Lower leg skin (tissue), 4 donors: ENCODE measurements at regions of chr2 and their contacts with region 1.

Region 1: GRCh38 chr2:57920342-57920939 is 126.2 kb upstream of the VRK2 start:
- DNase-seq: no peak
- H3K4me3 ChIP-seq: no peak overlapping the region
- CTCF ChIP-seq: no peak
- POLR2A ChIP-seq: no peak

Region 2: DNA sequence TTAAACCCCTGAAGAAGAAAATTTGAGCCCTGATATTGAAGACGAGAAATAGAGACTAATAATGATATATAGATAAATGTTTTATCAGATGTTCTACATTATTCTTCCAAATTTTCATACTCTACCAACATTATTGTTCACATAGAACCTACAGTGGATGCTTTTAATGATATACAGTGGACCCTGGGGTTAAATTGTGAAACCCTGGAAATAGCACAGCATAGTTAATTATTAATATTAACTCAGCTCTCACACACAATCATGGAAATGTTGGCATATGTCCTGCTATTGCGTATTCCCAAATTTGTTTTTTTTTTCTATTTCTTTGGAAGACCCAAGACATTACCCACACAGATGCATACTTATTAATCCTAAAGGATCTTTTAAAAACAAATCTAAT is 1156.8 kb before region 1 on chr2:
- intact Hi-C with region 1: no loop called
- DNase-seq: no peak
- H3K4me3 ChIP-seq: no peak overlapping the region
- CTCF ChIP-seq: no peak
- POLR2A ChIP-seq: no peak

Region 3: DNA sequence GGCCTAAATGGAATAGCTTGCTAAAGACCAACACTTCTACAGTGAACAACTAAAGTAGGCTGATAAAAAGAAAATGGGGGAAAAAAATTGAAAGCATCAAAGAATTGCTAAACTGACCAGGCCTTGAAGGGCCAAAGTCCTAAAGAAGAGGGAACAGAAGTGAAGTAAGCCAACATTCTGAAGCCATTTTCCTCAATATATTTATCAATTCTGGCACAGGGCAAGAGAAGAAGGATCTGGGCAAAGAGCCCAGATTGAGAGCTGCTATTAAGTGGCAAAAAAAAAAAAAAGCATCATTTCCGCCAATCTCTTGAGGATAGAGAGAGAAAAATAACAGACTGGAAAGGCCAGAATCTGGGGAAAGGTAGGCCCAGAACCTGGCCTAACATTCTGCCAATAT is 295.0 kb after region 1 on chr2:
- intact Hi-C with region 1: loop called (anchors 5 kb)
- DNase-seq: no peak
- H3K4me3 ChIP-seq: no peak overlapping the region
- CTCF ChIP-seq: no peak
- POLR2A ChIP-seq: no peak

Region 4: DNA sequence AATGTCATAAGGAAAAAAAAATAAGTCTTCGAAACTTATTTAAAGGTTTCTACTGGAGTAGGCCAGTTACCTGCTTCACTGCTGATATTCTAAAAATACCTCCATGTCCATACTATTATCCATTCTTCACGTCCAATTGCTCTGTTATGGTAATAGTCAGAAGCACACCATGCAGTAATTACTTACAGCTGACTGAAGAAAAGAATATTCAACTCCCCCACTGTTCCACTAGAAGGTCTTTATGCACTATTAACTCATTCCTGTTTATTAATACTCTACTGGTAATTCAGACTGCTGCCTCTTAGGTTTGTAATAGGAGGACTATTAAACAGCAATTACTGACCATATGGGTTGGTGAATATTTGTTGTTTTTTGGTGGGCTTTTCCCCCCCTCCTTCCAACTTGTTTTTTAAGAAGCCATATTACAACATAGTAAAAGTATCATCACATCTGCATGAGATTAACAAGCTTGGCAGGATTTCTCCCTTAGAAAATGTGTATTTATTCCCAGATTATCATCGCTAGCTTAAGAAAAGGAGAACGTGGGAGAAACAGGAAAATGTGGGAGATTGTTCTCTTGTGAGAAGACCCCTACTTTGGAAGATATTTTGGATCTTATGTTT is 1127.0 kb after region 1 on chr2:
- intact Hi-C with region 1: no loop called
- DNase-seq: no peak
- H3K4me3 ChIP-seq: no peak overlapping the region
- CTCF ChIP-seq: no peak
- POLR2A ChIP-seq: no peak